Activated T-helper 2 cell treated with anti-CD3 and anti-CD28 coated beads, Interferon-gamma antibody, Interleukin-2, Interleukin-4, amounts not matched to agents 10 μg/mL and 5 μg/mL and 100 μg/mL, durations not matched to agents 14 hours and 24 hours and 36 hours (primary cell): ENCODE measurements at regions of chr1 and their contacts with region 1.

Region 1: DNA sequence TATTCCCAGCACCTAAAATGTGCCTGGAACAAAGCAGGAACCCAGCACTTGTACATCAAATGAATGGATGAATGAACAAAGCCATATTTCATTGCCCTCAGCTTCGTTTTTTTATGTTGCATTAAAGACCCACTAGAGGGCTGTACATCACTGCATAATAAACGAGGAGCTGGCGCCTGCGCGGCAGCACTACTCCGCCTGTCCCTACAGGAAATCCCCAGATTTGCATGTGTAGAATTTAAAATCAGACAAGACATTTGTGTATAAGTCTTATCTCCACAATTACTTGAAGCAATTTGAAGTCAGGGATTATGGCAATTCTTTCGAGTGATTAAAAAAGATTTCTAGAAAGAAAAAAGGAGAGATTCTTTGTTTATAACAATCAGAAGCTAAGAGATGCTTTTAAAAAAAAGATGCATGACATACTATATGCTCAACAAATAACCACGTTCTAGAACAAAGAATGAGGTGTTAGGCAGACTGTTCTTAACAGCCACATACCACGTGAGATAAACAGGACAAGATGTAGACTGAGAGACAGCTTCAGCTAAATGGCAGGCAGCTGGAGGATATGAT is 5.4 kb upstream of the NEK2 start:
- DNase-seq: peak; percentile 65
- H3K4me3 Mint-ChIP-seq: no peak overlapping the region
- H3K27ac Mint-ChIP-seq: peak overlapping the region; percentile 75
- H3K4me1 Mint-ChIP-seq: peaks cover 10% of the 10 kb centered on the region
- H3K27me3 Mint-ChIP-seq: peaks cover 2% of the 10 kb centered on the region

Region 2: GRCh38 chr1:211698161-211699026 is 17.6 kb after region 1 on chr1:
- intact Hi-C with region 1: loop called (anchors 2 kb)
- DNase-seq: peak; percentile 74
- H3K4me3 Mint-ChIP-seq: no peak overlapping the region
- H3K27ac Mint-ChIP-seq: no peak overlapping the region
- H3K4me1 Mint-ChIP-seq: peaks cover 12% of the 10 kb centered on the region
- H3K27me3 Mint-ChIP-seq: peaks cover 26% of the 10 kb centered on the region

Region 3: DNA sequence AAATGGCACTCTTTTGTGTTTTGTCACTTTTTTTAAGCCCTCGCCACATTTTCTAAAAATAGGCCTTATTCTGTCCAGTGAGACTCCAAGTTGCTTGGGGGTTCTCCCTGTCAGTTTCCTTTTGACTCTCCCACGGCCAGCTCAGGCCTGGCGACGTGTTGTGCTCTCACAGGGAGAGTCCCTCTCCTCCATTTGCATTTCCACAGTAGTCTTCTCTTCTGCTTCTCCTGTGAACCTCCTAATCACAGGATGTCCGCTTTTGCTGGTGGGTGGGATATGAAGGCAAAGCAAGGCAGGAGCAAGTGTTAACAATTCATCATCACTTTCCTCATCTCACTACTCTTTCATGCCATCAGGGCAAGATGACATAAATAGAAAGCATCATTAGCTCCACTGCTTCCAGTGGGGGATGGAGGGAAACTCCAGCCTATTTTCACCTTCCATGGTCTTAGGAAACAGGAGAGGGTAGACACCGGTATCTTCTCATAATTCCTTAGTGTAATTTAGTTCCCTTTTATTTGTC is 254.7 kb after region 1 on chr1:
- intact Hi-C with region 1: loop called (anchors 5 kb)
- DNase-seq: no peak
- H3K4me3 Mint-ChIP-seq: peak overlapping the region; percentile 3
- H3K27ac Mint-ChIP-seq: peak overlapping the region; percentile 6
- H3K4me1 Mint-ChIP-seq: peaks cover 43% of the 10 kb centered on the region
- H3K27me3 Mint-ChIP-seq: peaks cover 2% of the 10 kb centered on the region

Region 4: DNA sequence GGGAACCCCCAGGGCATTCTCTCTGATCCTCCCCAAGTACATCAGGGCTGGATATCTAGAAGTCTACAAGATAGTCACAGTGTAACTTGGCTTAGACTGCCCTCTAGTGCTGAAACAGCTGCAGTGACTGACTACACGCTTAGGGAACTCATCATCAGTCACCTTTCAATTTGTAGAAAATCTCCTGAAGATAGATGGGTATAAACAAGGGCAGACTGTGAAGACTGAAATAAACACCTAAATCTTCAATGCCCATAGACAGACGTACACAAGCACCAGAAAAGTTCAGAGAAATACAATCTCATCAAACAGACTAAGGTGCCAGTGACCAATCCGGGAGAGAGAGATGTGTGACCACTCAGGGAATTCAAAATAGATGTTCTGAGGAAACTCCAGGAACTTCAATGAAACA is 687.2 kb after region 1 on chr1:
- intact Hi-C with region 1: loop called (anchors 5 kb)
- DNase-seq: peak; percentile 42
- H3K4me3 Mint-ChIP-seq: no peak overlapping the region
- H3K27ac Mint-ChIP-seq: peak overlapping the region; percentile 17
- H3K4me1 Mint-ChIP-seq: peaks cover 4% of the 10 kb centered on the region
- H3K27me3 Mint-ChIP-seq: no peaks in the 10 kb centered on the region

Region 5: DNA sequence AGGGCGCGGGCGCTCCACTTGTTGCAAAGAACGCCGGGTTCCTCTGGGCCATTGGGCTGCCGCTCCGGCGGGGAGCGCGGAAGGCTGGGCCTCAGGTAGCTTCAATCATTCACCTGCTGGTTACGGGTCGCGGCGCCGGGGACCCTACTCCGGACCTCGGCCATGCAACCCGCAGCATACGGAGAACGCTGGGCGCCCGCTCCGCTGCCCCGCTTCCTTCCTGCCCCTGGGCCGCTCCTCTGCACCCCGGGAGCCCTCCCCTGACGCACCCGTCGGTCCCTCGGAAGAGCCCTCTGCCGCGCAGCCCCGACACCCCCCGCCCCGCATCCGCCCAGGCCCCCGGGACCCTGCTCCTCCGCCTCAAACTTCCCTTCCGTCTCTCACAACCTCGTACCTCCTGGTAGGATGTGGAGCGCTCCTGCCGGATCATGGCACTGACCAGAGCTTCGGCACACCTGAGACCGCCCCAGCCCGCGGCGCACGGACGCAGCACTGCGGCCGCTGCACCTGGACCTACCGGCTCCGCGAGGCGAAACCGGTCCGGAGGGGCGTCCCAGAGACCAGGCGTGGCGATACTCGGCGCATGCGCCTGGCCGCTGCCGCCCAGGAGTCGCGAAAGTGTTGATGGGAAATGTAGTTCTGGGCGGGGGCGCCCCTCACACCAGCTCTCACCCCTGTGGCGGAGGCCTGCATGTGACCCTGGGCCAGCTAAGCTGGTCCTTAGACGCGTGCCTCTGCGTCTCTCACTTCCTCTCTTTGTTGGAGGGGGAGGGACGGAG is 733.7 kb after region 1 on chr1 and contains the start of gene PACC1:
- intact Hi-C with region 1: no loop called
- DNase-seq: peak; percentile 90
- H3K4me3 Mint-ChIP-seq: peak within 1 kb of the TSS; percentile 100
- H3K27ac Mint-ChIP-seq: peak within 1 kb of the TSS; percentile 96
- H3K4me1 Mint-ChIP-seq: peaks cover 22% of the 10 kb centered on the region
- H3K27me3 Mint-ChIP-seq: no peaks in the 10 kb centered on the region
- total RNA-seq, gene PACC1: 19.4 and 20.1 TPM in 2 replicates

Region 6: DNA sequence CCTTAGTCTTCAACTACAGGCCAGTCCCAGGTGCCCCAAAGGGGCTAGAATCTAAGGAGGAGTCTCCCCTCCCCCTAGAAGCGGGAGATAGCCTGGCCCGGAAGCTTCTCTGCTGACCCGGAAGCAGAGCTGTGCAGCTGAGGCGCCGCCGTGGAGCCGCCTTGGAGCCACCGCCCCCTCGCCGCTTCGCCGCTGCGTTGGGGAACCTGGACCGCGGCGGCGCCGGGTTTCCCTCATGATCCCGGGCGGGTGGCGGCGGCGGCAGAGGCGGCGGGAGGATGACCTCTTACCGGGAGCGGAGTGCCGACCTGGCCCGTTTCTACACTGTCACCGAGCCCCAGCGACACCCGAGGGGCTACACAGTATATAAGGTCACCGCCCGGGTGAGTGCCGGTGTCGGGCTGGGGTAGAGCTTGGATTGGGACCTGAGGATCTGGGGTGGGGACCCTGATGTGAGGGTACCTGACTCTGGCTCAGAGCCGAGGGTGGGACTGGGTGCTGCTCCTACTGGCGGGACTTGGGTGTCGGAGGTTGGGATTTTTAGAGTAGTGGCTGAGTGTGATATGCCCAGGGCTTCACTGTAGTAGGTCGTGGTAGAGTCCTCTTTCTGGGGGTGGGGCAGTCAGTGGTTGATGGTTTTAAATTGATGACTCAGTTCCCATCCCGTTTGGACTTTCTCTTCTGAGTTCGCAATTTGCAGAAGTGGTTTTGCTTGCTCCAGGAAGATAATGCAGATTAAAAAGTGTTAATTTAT is 1370.5 kb after region 1 on chr1 and contains the start of gene RPS6KC1:
- intact Hi-C with region 1: loop called (anchors 2 kb)
- DNase-seq: peak; percentile 72
- H3K4me3 Mint-ChIP-seq: peak within 1 kb of the TSS; percentile 93
- H3K27ac Mint-ChIP-seq: peak within 1 kb of the TSS; percentile 89
- H3K4me1 Mint-ChIP-seq: peaks cover 31% of the 10 kb centered on the region
- H3K27me3 Mint-ChIP-seq: peaks cover 12% of the 10 kb centered on the region
- total RNA-seq, gene RPS6KC1: 7.2 and 7.3 TPM in 2 replicates